Heart left ventricle (tissue), 16 donors: ENCODE measurements at regions of chr13 and their contacts with region 1.

Region 1: DNA sequence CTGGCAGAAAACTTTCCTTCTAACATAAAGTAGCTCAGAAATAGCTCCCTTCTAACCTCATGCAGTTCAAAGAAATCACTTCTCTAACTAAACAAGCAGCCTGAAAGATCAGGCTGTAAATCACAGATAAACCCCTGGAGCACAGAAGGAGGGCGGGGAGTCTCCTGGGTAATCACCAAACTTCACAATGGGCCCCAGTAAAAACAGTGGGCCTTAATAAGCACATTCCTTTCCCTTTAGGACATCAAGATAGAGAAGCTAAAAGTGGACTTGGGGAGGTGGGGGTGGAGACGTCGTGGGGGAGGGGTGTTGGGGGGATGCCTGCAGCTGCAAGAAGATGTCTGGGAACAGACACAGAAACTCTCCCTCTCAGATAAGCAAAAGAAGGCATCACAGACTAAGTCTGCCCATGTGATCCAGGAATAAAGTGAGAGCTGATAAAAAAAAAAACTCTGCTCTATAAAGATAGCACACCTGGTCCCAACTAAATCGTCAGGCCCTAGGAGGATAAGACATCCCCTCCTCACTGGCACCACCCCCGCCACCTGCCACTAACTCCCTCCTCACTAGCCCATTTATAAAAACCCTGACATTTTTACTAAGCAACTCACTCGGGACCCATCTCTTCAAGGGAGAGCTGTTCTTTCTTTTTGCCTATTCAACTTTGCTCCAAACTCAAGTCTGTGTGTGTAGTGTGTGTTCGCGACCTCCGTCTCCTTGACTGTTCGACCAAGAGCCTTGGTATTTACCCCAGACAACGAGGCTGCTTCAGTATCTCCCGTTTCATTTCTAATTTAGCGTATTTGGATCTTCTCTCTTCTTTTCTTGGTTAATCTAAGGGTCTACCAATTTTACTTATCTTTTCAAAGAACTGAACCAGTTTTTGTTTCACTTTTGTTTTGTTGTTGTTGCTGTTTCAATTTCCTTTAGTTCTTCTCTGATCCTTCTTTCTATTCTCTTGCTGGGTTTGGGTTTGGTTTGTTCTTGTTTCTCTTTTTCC is 31.7 kb downstream of the DNAJC15 start:
- DNase-seq: peak in 4 of 5 donors; percentile 34 to 52 (median 42)
- ATAC-seq: peak; percentile 44 to 73 (median 70)
- H3K4me3 ChIP-seq: peak overlapping the region in 11 of 12 donors; percentile 25 to 63 (median 51)
- H3K27ac ChIP-seq: peak overlapping the region; percentile 58 to 93 (median 85)
- H3K4me1 ChIP-seq: peaks cover 5 to 65% (median 43%) of the 10 kb centered on the region in 12 donors
- H3K27me3 ChIP-seq: no peaks in the 10 kb centered on the region
- CTCF ChIP-seq: no peak
- POLR2A ChIP-seq: no peak

Region 2: DNA sequence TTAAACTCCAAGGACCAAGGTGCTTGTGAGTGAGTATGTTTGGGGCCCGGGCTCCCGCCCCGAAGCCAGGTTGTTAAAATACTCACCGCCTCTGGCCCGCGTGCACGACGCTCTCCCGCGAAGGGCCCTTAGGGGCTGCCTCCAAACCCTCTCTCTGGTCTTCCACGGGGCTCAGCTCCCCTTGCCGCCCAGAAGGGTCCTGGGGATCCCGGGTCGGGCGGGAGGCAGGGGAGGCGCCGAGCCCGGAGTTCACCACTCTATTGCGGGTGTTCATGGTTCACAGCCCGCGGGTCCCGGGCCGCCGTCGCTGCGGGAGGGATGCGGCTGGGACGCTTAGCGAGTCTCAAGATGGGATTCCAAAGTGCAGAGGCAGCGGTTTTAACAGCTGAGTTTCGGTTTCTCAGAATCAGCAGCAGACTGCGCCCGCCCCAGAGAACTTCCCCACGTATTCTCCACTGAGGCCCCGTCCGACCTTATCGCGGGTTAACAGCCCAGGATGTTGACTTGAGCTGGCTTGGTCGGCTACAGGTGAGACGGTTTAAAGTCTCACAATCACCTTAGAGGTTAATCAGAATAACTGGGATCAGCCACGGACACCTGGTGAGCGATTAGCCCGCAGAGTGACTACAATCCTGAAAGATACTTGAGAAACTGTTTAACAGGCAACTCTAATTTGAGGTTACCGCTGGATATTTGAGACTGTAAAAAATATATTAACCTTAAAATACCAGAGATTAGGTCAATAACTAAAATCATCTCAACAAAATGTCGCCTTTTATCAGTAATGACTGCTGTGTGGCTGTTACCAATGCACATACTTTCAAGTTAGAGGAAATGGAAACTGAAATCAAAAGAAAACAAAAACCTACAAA is 63.0 kb before region 1 on chr13 and contains the start of gene EPSTI1:
- intact Hi-C with region 1: loop called in 1 of 10 experiments (anchors 5 kb)
- DNase-seq: peak; percentile 66 to 83 (median 75)
- ATAC-seq: peak; percentile 76 to 93 (median 88)
- H3K4me3 ChIP-seq: peak within 1 kb of the TSS; percentile 50 to 93 (median 80)
- H3K27ac ChIP-seq: peak within 1 kb of the TSS; percentile 76 to 97 (median 88)
- H3K4me1 ChIP-seq: peaks cover 4 to 45% (median 13%) of the 10 kb centered on the region in 12 donors
- H3K27me3 ChIP-seq: no peaks in the 10 kb centered on the region
- CTCF ChIP-seq: no peak
- POLR2A ChIP-seq: no peak
- total RNA-seq, gene EPSTI1: 1.9 to 36.1 (median 5.5) TPM

Region 3: DNA sequence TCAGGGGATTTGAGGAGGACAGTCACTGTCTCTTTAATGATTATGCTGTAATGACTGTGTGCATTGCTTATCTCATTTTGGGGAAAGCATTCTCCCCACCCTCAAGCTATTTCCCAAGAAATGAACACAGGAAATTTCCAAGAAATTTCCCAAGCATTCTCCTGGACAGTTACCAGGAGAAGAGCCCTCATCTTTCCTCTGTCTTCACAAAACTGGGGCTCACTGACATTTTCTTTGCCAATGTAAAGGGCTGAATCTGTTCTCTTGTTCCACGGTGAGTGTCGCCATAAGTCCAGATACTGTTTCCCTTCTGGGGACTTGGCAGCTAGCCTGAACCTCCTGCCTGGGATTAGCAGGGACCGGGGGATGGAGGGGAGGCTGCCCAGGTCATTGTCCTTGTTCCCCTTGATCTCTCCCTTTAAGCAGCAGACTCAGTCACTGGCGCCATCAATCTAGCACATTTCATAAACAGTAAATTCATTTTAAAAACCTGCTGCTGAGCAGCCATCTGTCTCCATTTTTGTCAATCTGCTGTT is 141.1 kb after region 1 on chr13:
- intact Hi-C with region 1: no loop called
- DNase-seq: peak in 4 of 5 donors; percentile 60 to 73 (median 60)
- ATAC-seq: peak; percentile 44 to 85 (median 80)
- H3K4me3 ChIP-seq: peak overlapping the region in 1 of 12 donors; percentile 1
- H3K27ac ChIP-seq: no peak overlapping the region
- H3K4me1 ChIP-seq: peaks cover 0 to 14% (median 0%) of the 10 kb centered on the region in 12 donors
- H3K27me3 ChIP-seq: peaks cover 0 to 4% (median 0%) of the 10 kb centered on the region in 9 donors
- CTCF ChIP-seq: peak in 7 of 12 donors; percentile 9 to 54 (median 34)
- POLR2A ChIP-seq: no peak

Region 4: DNA sequence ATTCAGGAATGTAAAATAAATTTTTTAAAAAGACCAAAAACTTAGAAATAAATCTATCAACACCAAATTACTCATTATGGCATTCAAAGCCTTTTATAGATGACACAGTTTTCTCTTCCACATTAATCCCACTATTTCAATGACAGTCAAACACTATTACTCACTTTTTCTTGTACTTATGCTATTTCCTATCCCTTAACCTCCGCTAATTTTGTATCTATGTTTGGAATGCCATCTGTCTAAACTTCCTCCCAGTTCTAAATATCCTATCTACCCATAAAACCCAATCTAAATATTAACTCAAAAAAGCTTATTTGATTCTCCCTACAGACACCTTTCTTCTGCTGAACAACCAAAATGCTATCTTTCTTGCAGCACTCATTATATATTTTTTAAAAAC is 528.2 kb after region 1 on chr13:
- intact Hi-C with region 1: no loop called
- DNase-seq: no peak
- ATAC-seq: no peak
- H3K4me3 ChIP-seq: no peak overlapping the region
- H3K27ac ChIP-seq: no peak overlapping the region
- H3K4me1 ChIP-seq: no peaks in the 10 kb centered on the region
- H3K27me3 ChIP-seq: no peaks in the 10 kb centered on the region
- CTCF ChIP-seq: no peak
- POLR2A ChIP-seq: no peak